Gastrocnemius medialis (tissue), 4 donors: ENCODE measurements at regions of chr12 and their contacts with region 1.

Region 1: GRCh38 chr12:101407436-101408345 is at the start of gene ARL1:
- DNase-seq: peak; percentile 75 to 82
- ATAC-seq: peak; percentile 91 to 93
- H3K4me3 ChIP-seq: peak within 1 kb of the TSS; percentile 78 to 87 (median 84)
- H3K27ac ChIP-seq: peak within 1 kb of the TSS; percentile 86 to 95 (median 90)
- H3K4me1 ChIP-seq: peaks cover 33 to 35% of the 10 kb centered on the region in 2 donors
- H3K27me3 ChIP-seq: no peaks in the 10 kb centered on the region
- CTCF ChIP-seq: no peak
- POLR2A ChIP-seq: peak; percentile 41 to 57
- total RNA-seq, gene ARL1: 50.7 to 57.3 (median 52.8) TPM

Region 2: GRCh38 chr12:101616027-101616494 is 208.4 kb after region 1 on chr12:
- in situ Hi-C with region 1: no loop called
- intact Hi-C with region 1: loop called (anchors 5 kb)
- DNase-seq: no peak
- ATAC-seq: peak; percentile 26 to 72
- H3K4me3 ChIP-seq: peak overlapping the region in 2 of 4 donors; percentile 15 to 24
- H3K27ac ChIP-seq: peak overlapping the region; percentile 85 to 93 (median 92)
- H3K4me1 ChIP-seq: peaks cover 94 to 96% of the 10 kb centered on the region in 2 donors
- H3K27me3 ChIP-seq: no peaks in the 10 kb centered on the region
- CTCF ChIP-seq: no peak
- POLR2A ChIP-seq: peak in 1 of 2 donors; percentile 36

Region 3: GRCh38 chr12:101697197-101697929 is 289.7 kb after region 1 on chr12 and contains the start of gene CHPT1:
- in situ Hi-C with region 1: no loop called
- intact Hi-C with region 1: loop called (anchors 5 kb)
- DNase-seq: peak; percentile 79 to 90
- ATAC-seq: peak; percentile 51 to 52
- H3K4me3 ChIP-seq: peak within 1 kb of the TSS; percentile 72 to 94 (median 84)
- H3K27ac ChIP-seq: peak within 1 kb of the TSS; percentile 96 to 98 (median 96)
- H3K4me1 ChIP-seq: peaks cover 41 to 44% of the 10 kb centered on the region in 2 donors
- H3K27me3 ChIP-seq: no peaks in the 10 kb centered on the region
- CTCF ChIP-seq: no peak
- POLR2A ChIP-seq: peak; percentile 19 to 47
- total RNA-seq, gene CHPT1: 32.3 to 67.3 (median 36.1) TPM

Region 4: GRCh38 chr12:101773650-101774162 is 366.0 kb after region 1 on chr12:
- in situ Hi-C with region 1: loop called in 2 of 4 experiments (anchors 10 to 25 kb)
- intact Hi-C with region 1: no loop called
- DNase-seq: peak; percentile 30 to 55
- ATAC-seq: peak; percentile 81 to 86
- H3K4me3 ChIP-seq: no peak overlapping the region
- H3K27ac ChIP-seq: peak overlapping the region in 1 of 4 donors; percentile 3
- H3K4me1 ChIP-seq: peaks cover 12 to 22% of the 10 kb centered on the region in 2 donors
- H3K27me3 ChIP-seq: no peaks in the 10 kb centered on the region
- CTCF ChIP-seq: peak; percentile 89 to 94 (median 91)
- POLR2A ChIP-seq: no peak

Region 5: GRCh38 chr12:101830367-101831325 is 423.0 kb after region 1 on chr12 and contains the start of gene GNPTAB:
- in situ Hi-C with region 1: loop called in 3 of 4 experiments (anchors 10 to 25 kb)
- intact Hi-C with region 1: loop called (anchors 5 kb)
- DNase-seq: peak; percentile 81 to 88
- ATAC-seq: peak; percentile 84 to 88
- H3K4me3 ChIP-seq: peak within 1 kb of the TSS; percentile 69 to 90 (median 76)
- H3K27ac ChIP-seq: peak within 1 kb of the TSS; percentile 76 to 89 (median 82)
- H3K4me1 ChIP-seq: peaks cover 12 to 37% of the 10 kb centered on the region in 2 donors
- H3K27me3 ChIP-seq: no peaks in the 10 kb centered on the region
- CTCF ChIP-seq: peak; percentile 79 to 93 (median 90)
- POLR2A ChIP-seq: peak in 1 of 2 donors; percentile 61
- total RNA-seq, gene GNPTAB: 10.7 to 30.3 (median 16.2) TPM

Region 6: DNA sequence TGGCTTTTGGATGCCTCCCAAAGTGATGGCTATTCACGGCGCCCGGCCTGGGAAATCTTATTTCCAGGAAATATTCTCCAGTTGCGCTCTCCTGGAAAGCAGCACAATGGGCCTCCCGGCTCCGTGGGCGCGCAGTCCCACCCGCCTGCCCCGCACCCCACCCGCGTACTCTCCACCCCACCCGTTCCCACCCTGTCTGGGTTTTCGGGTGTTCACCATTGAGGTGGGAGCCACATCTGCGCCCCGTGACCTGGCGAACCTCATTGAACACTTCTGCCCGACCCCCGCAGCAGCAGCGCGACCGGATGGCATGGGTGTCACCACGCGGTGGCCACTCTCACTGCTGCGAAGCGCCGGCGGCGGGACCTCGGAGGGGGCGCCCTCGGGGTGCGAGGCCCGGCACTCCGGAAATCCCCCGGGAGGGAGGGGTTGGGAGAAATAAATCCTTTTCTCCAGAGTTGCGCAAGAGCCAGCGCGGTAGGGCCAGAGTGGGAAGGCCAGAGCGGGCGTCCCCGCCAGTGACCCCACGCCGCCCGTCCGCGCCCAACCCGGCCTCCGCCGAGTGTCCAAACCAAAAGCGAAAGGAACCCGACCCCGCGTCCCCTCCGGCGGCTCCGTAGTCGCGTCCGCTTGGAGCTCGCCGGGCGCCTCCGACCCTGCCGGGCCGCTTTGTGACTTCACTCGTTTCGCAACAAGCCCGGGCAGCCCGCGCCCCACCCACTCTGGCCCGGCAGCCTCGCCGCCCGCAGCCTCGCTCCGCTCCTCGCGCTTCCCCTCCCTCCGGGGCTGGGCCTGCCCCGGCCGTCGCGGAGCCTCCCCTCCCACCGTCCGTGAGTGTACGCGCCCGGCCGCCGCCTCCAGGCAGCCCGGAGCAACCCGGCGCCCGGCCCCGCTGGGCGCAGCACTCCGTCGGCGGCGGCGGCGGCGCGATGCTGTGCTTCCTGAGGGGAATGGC is 469.4 kb after region 1 on chr12 and contains the start of gene DRAM1:
- in situ Hi-C with region 1: no loop called
- intact Hi-C with region 1: loop called (anchors 1 kb)
- DNase-seq: peak; percentile 80 to 89
- ATAC-seq: peak; percentile 87 to 90
- H3K4me3 ChIP-seq: peak within 1 kb of the TSS; percentile 86 to 99 (median 92)
- H3K27ac ChIP-seq: peak within 1 kb of the TSS; percentile 95 to 97 (median 96)
- H3K4me1 ChIP-seq: peaks cover 0 to 13% of the 10 kb centered on the region in 2 donors
- H3K27me3 ChIP-seq: no peaks in the 10 kb centered on the region
- CTCF ChIP-seq: peak in 2 of 5 experiments; percentile 12 to 25
- POLR2A ChIP-seq: peak; percentile 83 to 86
- total RNA-seq, gene DRAM1: 2.9 to 7.2 (median 4.1) TPM